ENCODE measurements at regions of chr13 and their contacts with region 1.

Region 1: GRCh38 chr13:91185294-91185863 is 162.1 kb upstream of the MIR17HG start:
- DNase-seq: peak in 1 of 2 experiments; percentile 15
- ATAC-seq: peak; percentile 64 to 71; a peak in 4 of 6 replicates
- H3K4me3 ChIP-seq: no peak overlapping the region
- H3K27ac ChIP-seq: no peak overlapping the region
- H3K4me1 ChIP-seq: no peaks in the 10 kb centered on the region
- CTCF ChIP-seq: peak; percentile 46
- EP300 ChIP-seq: no peak
- POLR2A ChIP-seq: no peak
- RAD21 ChIP-seq: peak; percentile 55 to 59

Region 2: GRCh38 chr13:91133941-91134802 is 51.2 kb before region 1 on chr13:
- CTCF ChIA-PET with region 1: interaction called, 13 read pairs
- POLR2A ChIA-PET with region 1: no interaction called
- DNase-seq: peak; percentile 18 to 57
- ATAC-seq: peak; percentile 89 to 91
- H3K4me3 ChIP-seq: no peak overlapping the region
- H3K27ac ChIP-seq: no peak overlapping the region
- H3K4me1 ChIP-seq: no peaks in the 10 kb centered on the region
- CTCF ChIP-seq: peak; percentile 58
- EP300 ChIP-seq: no peak
- POLR2A ChIP-seq: no peak
- RAD21 ChIP-seq: peak; percentile 53 to 58

Region 3: DNA sequence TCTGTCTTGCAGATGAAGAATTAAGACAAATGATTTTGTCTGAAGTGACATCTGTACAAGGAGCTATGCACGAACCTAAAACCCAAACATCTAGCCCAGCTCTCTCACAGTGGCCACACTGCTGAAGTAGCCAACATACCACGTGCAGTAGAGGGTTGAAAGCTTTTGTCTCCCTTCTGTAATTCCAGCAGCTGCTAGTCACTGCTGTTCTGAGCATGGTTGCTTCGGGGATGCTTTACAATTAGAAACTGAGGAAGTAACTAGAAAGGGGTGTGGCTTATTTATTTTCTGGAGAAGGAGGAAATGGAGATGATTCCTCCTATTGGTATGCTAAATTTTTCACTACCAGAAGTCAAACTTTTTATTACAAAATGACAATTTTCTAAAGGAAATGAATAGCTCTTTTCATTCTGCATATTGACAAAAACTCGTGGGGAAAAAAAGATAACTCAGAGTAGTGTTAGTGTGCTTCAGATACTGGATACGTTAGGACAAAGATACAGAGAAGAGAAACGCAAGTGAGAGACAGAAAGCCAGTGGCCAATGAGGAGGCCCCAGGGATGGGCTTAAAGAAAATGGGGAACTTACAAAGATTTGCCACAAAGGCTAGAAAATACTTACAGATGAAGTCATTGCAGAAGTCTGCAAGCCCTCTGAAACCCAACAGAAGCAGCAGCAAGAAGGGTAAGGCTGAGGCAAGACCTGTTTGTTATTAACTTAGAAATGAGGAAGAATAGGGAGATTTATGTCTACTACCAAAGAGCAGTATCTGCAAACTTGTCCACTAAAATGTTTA is 30.6 kb before region 1 on chr13:
- CTCF ChIA-PET with region 1: no interaction called
- POLR2A ChIA-PET with region 1: no interaction called
- DNase-seq: no peak
- ATAC-seq: no peak
- H3K4me3 ChIP-seq: no peak overlapping the region
- H3K27ac ChIP-seq: no peak overlapping the region
- H3K4me1 ChIP-seq: no peaks in the 10 kb centered on the region
- CTCF ChIP-seq: no peak
- EP300 ChIP-seq: no peak
- POLR2A ChIP-seq: no peak
- RAD21 ChIP-seq: no peak

Measured in A549 (cell line).